ENCODE measurements at regions of chrX and their contacts with region 1.

Region 1: GRCh38 chrX:21985332-21985777 is 44.8 kb downstream of the SMS start:
- DNase-seq: peak; percentile 67
- ATAC-seq: peak; percentile 74
- H3K4me3 ChIP-seq: no peak overlapping the region
- H3K27ac ChIP-seq: no peak overlapping the region
- H3K4me1 ChIP-seq: peaks cover 4% of the 10 kb centered on the region; the same call in 1 of the 2 replicates
- H3K27me3 ChIP-seq: no peaks in the 10 kb centered on the region
- CTCF ChIP-seq: peak; percentile 86 to 99 (median 97); a peak in 5 of 6 replicates
- EP300 ChIP-seq: no peak
- POLR2A ChIP-seq: no peak
- RAD21 ChIP-seq: peak; percentile 95

Region 2: GRCh38 chrX:21394792-21395191 is 590.6 kb before region 1 on chrX:
- CTCF ChIA-PET with region 1: no interaction called
- POLR2A ChIA-PET with region 1: no interaction called
- RAD21 ChIA-PET with region 1: no interaction called
- SMC1A ChIA-PET with region 1: no interaction called
- in situ Hi-C with region 1: no loop called
- intact Hi-C with region 1: no loop called
- DNase-seq: no peak
- ATAC-seq: no peak
- H3K4me3 ChIP-seq: no peak overlapping the region
- H3K27ac ChIP-seq: no peak overlapping the region
- H3K4me1 ChIP-seq: no peaks in the 10 kb centered on the region
- H3K27me3 ChIP-seq: no peaks in the 10 kb centered on the region
- CTCF ChIP-seq: no peak
- EP300 ChIP-seq: no peak
- POLR2A ChIP-seq: no peak
- RAD21 ChIP-seq: no peak

Region 3: GRCh38 chrX:21914306-21914953 is 70.9 kb before region 1 on chrX:
- CTCF ChIA-PET with region 1: no interaction called
- POLR2A ChIA-PET with region 1: no interaction called
- RAD21 ChIA-PET with region 1: no interaction called
- SMC1A ChIA-PET with region 1: no interaction called
- in situ Hi-C with region 1: no loop called
- intact Hi-C with region 1: no loop called
- DNase-seq: no peak
- ATAC-seq: no peak
- H3K4me3 ChIP-seq: no peak overlapping the region
- H3K27ac ChIP-seq: no peak overlapping the region
- H3K4me1 ChIP-seq: no peaks in the 10 kb centered on the region
- H3K27me3 ChIP-seq: no peaks in the 10 kb centered on the region
- CTCF ChIP-seq: no peak
- EP300 ChIP-seq: no peak
- POLR2A ChIP-seq: no peak
- RAD21 ChIP-seq: no peak

Region 4: DNA sequence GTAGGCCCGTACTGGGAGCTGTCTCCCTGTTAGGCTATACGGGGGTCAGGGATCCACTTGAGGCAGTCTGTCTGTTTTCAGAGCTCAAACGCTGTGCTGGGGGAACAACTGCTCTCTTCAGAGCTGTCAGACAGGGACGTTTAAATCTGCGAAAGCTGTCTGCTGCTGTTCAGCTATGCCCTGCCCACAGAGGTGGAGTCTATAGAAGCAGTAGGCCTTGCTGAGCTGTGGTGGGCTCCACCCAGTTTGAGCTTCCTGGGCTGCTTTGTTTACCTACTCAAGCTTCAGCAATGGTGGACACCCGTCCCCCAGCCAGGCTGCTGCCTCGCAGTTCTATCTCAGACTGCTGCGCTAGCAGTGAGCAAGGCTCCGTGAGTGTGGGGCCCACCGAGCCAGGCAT is 19.5 kb after region 1 on chrX:
- CTCF ChIA-PET with region 1: interaction called, 10 read pairs
- POLR2A ChIA-PET with region 1: no interaction called
- RAD21 ChIA-PET with region 1: interaction called, 3 read pairs
- SMC1A ChIA-PET with region 1: interaction called, 9 read pairs
- in situ Hi-C with region 1: no loop called
- intact Hi-C with region 1: no loop called
- DNase-seq: no peak
- ATAC-seq: no peak
- H3K4me3 ChIP-seq: no peak overlapping the region
- H3K27ac ChIP-seq: no peak overlapping the region
- H3K4me1 ChIP-seq: no peaks in the 10 kb centered on the region
- H3K27me3 ChIP-seq: no peaks in the 10 kb centered on the region
- CTCF ChIP-seq: no peak
- EP300 ChIP-seq: no peak
- POLR2A ChIP-seq: no peak
- RAD21 ChIP-seq: no peak

Region 5: DNA sequence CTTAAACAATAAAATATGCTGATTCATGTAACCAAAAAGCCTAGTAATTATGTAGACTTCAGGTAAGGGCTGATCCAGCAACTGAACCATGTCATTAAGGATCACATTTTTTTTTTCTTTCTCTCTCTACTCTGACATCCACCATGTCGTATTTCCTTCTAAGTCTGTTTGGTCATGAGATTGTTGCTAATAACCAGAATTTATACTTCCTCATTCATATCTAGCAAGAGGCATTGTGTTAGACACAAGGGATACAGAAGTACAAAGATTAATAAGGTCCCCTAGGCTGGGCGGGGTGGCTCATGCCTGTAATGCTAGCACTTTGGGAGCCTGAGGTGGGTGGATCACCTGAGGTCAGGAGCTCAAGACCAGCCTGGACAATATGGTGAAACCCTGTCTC is 70.9 kb after region 1 on chrX:
- CTCF ChIA-PET with region 1: interaction called, 23 read pairs
- POLR2A ChIA-PET with region 1: interaction called, 23 read pairs
- RAD21 ChIA-PET with region 1: interaction called, 24 read pairs
- SMC1A ChIA-PET with region 1: interaction called, 54 read pairs
- in situ Hi-C with region 1: no loop called
- intact Hi-C with region 1: no loop called
- DNase-seq: no peak
- ATAC-seq: peak; percentile 43
- H3K4me3 ChIP-seq: no peak overlapping the region
- H3K27ac ChIP-seq: no peak overlapping the region
- H3K4me1 ChIP-seq: peaks cover 13% of the 10 kb centered on the region
- H3K27me3 ChIP-seq: no peaks in the 10 kb centered on the region
- CTCF ChIP-seq: no peak
- EP300 ChIP-seq: no peak
- POLR2A ChIP-seq: no peak
- RAD21 ChIP-seq: no peak

Region 6: GRCh38 chrX:22109442-22109841 is 124.1 kb after region 1 on chrX:
- CTCF ChIA-PET with region 1: interaction called, 14 read pairs
- POLR2A ChIA-PET with region 1: interaction called, 4 read pairs
- RAD21 ChIA-PET with region 1: interaction called, 10 read pairs
- SMC1A ChIA-PET with region 1: interaction called, 5 read pairs
- in situ Hi-C with region 1: no loop called
- intact Hi-C with region 1: no loop called
- DNase-seq: no peak
- ATAC-seq: peak; percentile 50
- H3K4me3 ChIP-seq: no peak overlapping the region
- H3K27ac ChIP-seq: no peak overlapping the region
- H3K4me1 ChIP-seq: no peaks in the 10 kb centered on the region
- H3K27me3 ChIP-seq: no peaks in the 10 kb centered on the region
- CTCF ChIP-seq: no peak
- EP300 ChIP-seq: no peak
- POLR2A ChIP-seq: no peak
- RAD21 ChIP-seq: no peak

Region 7: GRCh38 chrX:22186165-22186564 is 200.8 kb after region 1 on chrX:
- CTCF ChIA-PET with region 1: interaction called, 22 read pairs
- POLR2A ChIA-PET with region 1: no interaction called
- RAD21 ChIA-PET with region 1: interaction called, 16 read pairs
- SMC1A ChIA-PET with region 1: interaction called, 23 read pairs
- in situ Hi-C with region 1: no loop called
- intact Hi-C with region 1: no loop called
- DNase-seq: no peak
- ATAC-seq: peak; percentile 74
- H3K4me3 ChIP-seq: no peak overlapping the region
- H3K27ac ChIP-seq: no peak overlapping the region
- H3K4me1 ChIP-seq: no peaks in the 10 kb centered on the region
- H3K27me3 ChIP-seq: no peaks in the 10 kb centered on the region
- CTCF ChIP-seq: no peak
- EP300 ChIP-seq: no peak
- POLR2A ChIP-seq: no peak
- RAD21 ChIP-seq: no peak

Region 8: GRCh38 chrX:22526339-22526738 is 541.0 kb after region 1 on chrX:
- CTCF ChIA-PET with region 1: no interaction called
- POLR2A ChIA-PET with region 1: no interaction called
- RAD21 ChIA-PET with region 1: no interaction called
- SMC1A ChIA-PET with region 1: no interaction called
- in situ Hi-C with region 1: no loop called
- intact Hi-C with region 1: loop called (anchors 10 kb)
- DNase-seq: peak; percentile 71
- ATAC-seq: peak; percentile 99
- H3K4me3 ChIP-seq: no peak overlapping the region
- H3K27ac ChIP-seq: no peak overlapping the region
- H3K4me1 ChIP-seq: no peaks in the 10 kb centered on the region
- H3K27me3 ChIP-seq: no peaks in the 10 kb centered on the region
- CTCF ChIP-seq: no peak
- EP300 ChIP-seq: peak; percentile 53 to 92; a peak in 3 of 4 replicates
- POLR2A ChIP-seq: no peak
- RAD21 ChIP-seq: no peak

Region 9: GRCh38 chrX:23901805-23902204 is 1916.5 kb after region 1 on chrX:
- CTCF ChIA-PET with region 1: interaction called, 16 read pairs
- POLR2A ChIA-PET with region 1: no interaction called
- RAD21 ChIA-PET with region 1: interaction called, 18 read pairs
- SMC1A ChIA-PET with region 1: interaction called, 7 read pairs
- in situ Hi-C with region 1: loop called (anchors 10 kb)
- intact Hi-C with region 1: no loop called
- DNase-seq: peak; percentile 60
- ATAC-seq: peak; percentile 85
- H3K4me3 ChIP-seq: no peak overlapping the region
- H3K27ac ChIP-seq: peak overlapping the region; percentile 71
- H3K4me1 ChIP-seq: peaks cover 12% of the 10 kb centered on the region
- H3K27me3 ChIP-seq: no peaks in the 10 kb centered on the region
- CTCF ChIP-seq: peak; percentile 46 to 72 (median 50); a peak in 5 of 6 replicates
- EP300 ChIP-seq: no peak
- POLR2A ChIP-seq: no peak
- RAD21 ChIP-seq: peak; percentile 73

Measured in GM12878 (cell line).